ENCODE measurements at regions of chr11 and their contacts with region 1.

Region 1: DNA sequence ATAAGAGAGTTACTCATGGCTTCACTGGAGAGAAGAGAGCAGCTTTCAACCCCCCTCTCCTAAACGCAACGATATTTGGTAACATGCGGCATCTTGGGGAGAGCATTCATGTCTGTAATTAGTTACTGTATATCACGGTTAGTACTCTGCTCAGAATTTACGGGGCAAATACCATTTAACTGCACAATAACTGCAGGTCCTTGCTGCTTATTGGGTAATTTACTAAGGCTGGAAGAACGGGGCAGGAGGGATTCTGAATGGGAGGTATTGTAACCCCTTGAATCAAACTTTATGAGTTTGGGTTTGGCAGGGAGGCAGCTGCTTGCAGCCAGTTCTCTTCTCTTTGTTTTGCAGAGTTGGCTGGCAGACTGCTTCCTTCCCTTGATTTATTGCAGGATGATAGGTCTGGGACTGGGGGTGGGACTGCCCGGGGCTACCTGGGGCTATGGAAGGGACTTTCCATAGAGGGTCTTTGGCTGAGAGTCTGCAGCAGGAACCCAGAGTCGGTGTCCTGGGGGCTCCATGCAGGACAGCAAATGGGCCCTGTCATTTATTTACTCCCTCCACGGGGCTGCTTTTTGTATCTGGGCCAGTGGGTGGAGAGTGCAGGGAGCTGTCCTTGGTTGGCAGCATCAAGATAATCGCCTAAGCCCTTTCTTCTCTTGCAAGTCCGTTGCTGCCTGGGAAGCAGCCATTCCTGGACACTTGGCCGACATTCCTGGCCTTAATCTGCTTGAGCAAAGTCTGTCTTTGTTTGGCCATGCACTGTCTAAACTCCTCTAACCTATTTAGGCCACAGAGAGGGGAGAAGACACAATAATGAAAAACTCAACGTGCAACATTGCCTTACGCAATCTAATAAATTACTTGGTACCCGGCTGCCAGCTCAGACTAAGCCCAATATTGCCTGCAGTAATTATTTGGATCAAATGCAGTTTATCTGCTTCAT is 188.9 kb downstream of the ST3GAL4 start:
- DNase-seq: peak; percentile 2
- H3K4me3 ChIP-seq: no peak overlapping the region
- H3K27ac ChIP-seq: no peak overlapping the region
- H3K4me1 ChIP-seq: peaks cover 8% of the 10 kb centered on the region
- H3K27me3 ChIP-seq: no peaks in the 10 kb centered on the region
- CTCF ChIP-seq: no peak

Region 2: DNA sequence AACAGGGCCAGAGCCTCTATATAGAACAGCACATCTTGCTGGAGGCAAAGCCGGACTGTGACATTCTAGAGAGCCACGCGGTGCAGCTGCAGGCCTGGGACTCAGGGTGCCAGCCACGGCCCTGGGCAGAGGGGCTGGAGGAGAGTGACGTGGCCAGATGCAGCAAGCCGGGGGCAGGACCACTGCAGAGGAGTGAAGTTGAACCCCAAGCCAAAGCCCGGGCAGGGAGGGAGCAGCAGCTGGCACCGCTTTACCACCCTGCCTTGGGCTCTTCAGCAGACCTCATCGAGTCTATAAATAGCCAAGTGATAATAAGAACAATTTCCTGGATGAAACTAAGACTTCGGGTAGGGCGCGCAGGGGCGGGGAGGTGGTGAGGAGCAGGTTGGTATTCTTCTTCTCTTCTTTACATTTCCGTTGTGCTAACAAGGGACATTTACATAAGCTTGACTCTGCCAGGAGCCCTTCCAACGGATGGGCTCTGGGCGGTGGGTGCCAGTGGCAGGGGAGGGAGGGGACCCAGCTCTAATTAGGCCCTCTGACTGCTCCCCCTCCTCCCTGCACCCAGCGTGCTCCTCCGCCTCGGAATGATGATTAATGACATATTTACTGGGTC is 78.7 kb before region 1 on chr11:
- CTCF ChIA-PET with region 1: no interaction called
- dilution Hi-C with region 1: loop called (anchors 5 kb)
- in situ Hi-C with region 1: no loop called
- intact Hi-C with region 1: no loop called
- DNase-seq: no peak
- H3K4me3 ChIP-seq: no peak overlapping the region
- H3K27ac ChIP-seq: no peak overlapping the region
- H3K4me1 ChIP-seq: no peaks in the 10 kb centered on the region
- H3K27me3 ChIP-seq: no peaks in the 10 kb centered on the region
- CTCF ChIP-seq: no peak